ENCODE measurements at regions of chr1 and their contacts with region 1.

Region 1: GRCh38 chr1:246689409-246690008 is 34.7 kb upstream of the SCCPDH start:
- DNase-seq: peak; percentile 83

Region 2: DNA sequence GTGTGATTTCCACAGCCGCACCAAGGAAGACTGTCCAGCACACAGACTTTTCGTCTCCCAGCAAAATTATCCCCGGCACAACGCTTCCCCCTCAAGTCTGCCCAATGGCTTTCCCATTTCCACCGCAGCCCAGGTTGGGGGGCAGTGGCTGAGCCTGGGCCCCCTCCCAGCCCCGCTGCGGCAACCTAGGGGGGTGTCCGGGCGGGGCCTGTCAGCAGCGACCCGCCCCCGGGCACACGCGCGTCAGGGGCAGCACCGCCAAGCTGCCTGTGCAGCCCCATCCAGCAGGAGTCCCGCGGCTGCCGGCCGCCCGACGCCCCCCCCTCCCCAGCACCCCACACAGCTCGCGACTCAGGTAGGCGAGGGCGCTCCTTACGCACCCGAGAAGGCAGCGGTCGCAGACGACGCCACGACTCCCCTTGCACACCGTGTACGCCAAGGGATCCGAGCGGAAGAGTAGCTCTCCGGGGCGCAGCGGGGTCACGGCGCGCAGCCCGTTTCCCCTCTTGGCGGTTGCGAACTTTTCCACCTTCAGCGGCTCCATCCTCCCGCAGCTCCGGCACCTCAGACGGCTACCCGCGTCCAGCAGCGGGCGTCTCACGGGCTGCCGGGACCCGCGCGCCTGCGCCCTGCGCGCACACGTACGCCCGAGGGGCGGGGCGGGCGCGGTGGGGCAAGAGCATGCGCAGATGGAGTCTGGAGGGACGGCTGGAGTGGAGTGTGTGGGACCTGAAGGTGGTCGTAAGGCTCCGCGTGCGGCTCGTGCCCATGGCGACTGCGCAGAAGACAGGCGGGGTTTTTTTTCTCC is 182.6 kb before region 1 on chr1 and contains the start of gene SMYD3:
- intact Hi-C with region 1: loop called in 1 of 2 experiments (anchors 5 kb)
- DNase-seq: peak; percentile 89
- total RNA-seq, gene SMYD3: 16.7 to 18.2 TPM

Measured in posterior vena cava (tissue), 2 donors.